GM12878 (cell line): ENCODE measurements at regions of chr12 and their contacts with region 1.

Region 1: DNA sequence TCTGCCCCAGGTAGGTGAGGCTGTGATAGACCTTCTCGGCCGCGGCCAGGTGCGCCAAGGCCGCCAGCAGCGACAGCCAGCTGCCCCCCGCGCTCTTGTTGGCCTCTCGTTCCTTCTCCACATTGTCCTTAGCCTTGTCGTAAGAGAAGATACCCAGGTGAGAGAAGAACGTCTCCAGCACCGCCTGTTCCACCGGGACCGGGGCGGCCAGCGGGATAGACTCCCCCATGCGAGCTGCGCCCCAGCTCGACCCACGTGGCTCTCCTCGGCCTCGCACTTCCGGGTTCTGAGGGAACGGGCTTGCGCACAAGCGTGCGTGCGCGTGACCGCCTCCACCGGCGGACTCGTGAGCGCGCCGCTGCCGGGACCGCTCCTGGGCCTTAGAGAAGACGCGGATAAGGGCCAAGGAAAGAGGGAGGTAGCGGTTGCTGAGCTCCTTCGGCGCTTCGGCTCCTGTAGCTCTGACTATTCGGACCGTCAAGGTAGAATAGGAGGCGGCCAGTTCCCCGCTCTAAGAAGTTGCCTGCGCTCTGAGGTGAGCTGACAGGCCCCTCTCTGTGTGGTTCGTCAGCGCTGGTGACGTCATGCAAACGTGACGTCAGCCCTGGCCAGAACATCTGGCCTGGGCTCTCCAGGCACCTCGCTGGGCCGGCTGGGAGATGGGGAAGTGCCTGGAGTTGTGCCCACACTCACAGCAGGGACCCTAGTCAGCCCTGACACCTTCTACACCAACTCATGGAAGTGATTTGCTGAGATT is at the start of gene KICS2:
- DNase-seq: peak; percentile 69
- ATAC-seq: peak; percentile 92
- H3K4me3 ChIP-seq: peak within 1 kb of the TSS; percentile 87
- H3K27ac ChIP-seq: peak within 1 kb of the TSS; percentile 64
- H3K4me1 ChIP-seq: no peaks in the 10 kb centered on the region; the same call in 1 of the 2 replicates
- H3K27me3 ChIP-seq: no peaks in the 10 kb centered on the region
- CTCF ChIP-seq: no peak
- EP300 ChIP-seq: no peak
- POLR2A ChIP-seq: peak; percentile 99
- RAD21 ChIP-seq: no peak
- polyA plus RNA-seq, gene KICS2: 3.9 to 4.4 TPM

Region 2: DNA sequence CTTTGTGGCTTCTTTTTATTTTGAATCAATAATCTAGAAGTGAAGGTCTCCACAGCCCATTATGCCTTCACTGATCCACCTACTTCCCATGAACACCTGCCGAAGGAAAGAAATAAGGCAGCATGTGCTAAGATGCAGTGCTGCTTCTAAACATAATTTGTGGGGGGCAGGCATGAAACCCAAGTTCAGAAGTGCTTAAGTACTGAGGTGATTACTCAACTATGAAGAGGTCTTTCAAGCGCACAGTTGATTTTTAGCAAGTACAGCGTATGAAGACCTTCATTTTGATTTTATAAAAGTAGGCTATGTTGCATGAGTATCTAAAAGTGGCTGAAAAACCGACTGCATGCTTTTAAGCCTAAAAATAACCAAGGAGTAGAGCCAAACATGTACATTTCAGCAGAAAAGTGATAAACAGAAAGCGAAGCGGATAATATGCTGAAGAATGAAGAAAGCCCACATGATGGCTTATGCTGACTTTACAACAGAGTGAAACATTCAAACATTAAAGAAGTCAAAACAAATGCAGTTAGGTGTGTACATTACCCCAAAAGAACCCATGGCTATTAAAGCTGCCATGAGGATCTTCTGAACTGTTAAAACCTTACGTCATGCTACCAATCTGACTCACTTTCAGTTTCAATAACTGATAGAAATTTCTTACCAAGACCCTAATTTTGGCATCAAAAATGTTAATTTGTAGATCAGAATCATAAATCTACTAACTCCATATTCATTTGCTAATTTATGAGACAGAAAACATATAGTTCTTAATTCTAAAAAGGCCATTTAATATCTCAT is 29.3 kb before region 1 on chr12:
- CTCF ChIA-PET with region 1: interaction called, 5 read pairs
- POLR2A ChIA-PET with region 1: no interaction called
- RAD21 ChIA-PET with region 1: no interaction called
- SMC1A ChIA-PET with region 1: interaction called, 3 read pairs
- in situ Hi-C with region 1: no loop called
- intact Hi-C with region 1: loop called (anchors 2 kb)
- DNase-seq: no peak
- ATAC-seq: peak; percentile 98
- H3K4me3 ChIP-seq: no peak overlapping the region
- H3K27ac ChIP-seq: peak overlapping the region; percentile 46; the same call in 1 of the 2 replicates
- H3K4me1 ChIP-seq: peaks cover 10% of the 10 kb centered on the region; the same call in 1 of the 2 replicates
- H3K27me3 ChIP-seq: no peaks in the 10 kb centered on the region
- CTCF ChIP-seq: no peak
- EP300 ChIP-seq: peak in 1 of 2 experiments; percentile 46; a peak in 1 of 4 replicates
- POLR2A ChIP-seq: no peak
- RAD21 ChIP-seq: no peak

Region 3: GRCh38 chr12:64451687-64452558 is 229.7 kb after region 1 on chr12 and contains the start of gene TBK1:
- CTCF ChIA-PET with region 1: no interaction called
- POLR2A ChIA-PET with region 1: no interaction called
- RAD21 ChIA-PET with region 1: no interaction called
- SMC1A ChIA-PET with region 1: no interaction called
- in situ Hi-C with region 1: no loop called
- intact Hi-C with region 1: loop called (anchors 5 kb)
- DNase-seq: peak; percentile 53
- ATAC-seq: peak; percentile 92
- H3K4me3 ChIP-seq: peak within 1 kb of the TSS; percentile 97
- H3K27ac ChIP-seq: peak within 1 kb of the TSS; percentile 88
- H3K4me1 ChIP-seq: peaks cover 1% of the 10 kb centered on the region; the same call in 1 of the 2 replicates
- H3K27me3 ChIP-seq: no peaks in the 10 kb centered on the region
- CTCF ChIP-seq: no peak
- EP300 ChIP-seq: no peak
- POLR2A ChIP-seq: peak; percentile 83
- RAD21 ChIP-seq: no peak
- polyA plus RNA-seq, gene TBK1: 13.4 to 18.0 TPM